Activated CD8-positive, alpha-beta T cell treated with anti-CD3 and anti-CD28 coated beads, Interleukin-2, amount 10 ng/mL, durations not matched to agents 7 days and 5 days (primary cell): ENCODE measurements at regions of chr5 and their contacts with region 1.

Region 1: GRCh38 chr5:40410231-40410861 is 269.4 kb upstream of the PTGER4 start:
- DNase-seq: peak; percentile 82
- ATAC-seq: peak; percentile 85
- H3K4me3 Mint-ChIP-seq: peak overlapping the region; percentile 60
- H3K27ac Mint-ChIP-seq: peak overlapping the region; percentile 91
- H3K4me1 Mint-ChIP-seq: peaks cover 62% of the 10 kb centered on the region
- H3K27me3 Mint-ChIP-seq: no peaks in the 10 kb centered on the region

Region 2: DNA sequence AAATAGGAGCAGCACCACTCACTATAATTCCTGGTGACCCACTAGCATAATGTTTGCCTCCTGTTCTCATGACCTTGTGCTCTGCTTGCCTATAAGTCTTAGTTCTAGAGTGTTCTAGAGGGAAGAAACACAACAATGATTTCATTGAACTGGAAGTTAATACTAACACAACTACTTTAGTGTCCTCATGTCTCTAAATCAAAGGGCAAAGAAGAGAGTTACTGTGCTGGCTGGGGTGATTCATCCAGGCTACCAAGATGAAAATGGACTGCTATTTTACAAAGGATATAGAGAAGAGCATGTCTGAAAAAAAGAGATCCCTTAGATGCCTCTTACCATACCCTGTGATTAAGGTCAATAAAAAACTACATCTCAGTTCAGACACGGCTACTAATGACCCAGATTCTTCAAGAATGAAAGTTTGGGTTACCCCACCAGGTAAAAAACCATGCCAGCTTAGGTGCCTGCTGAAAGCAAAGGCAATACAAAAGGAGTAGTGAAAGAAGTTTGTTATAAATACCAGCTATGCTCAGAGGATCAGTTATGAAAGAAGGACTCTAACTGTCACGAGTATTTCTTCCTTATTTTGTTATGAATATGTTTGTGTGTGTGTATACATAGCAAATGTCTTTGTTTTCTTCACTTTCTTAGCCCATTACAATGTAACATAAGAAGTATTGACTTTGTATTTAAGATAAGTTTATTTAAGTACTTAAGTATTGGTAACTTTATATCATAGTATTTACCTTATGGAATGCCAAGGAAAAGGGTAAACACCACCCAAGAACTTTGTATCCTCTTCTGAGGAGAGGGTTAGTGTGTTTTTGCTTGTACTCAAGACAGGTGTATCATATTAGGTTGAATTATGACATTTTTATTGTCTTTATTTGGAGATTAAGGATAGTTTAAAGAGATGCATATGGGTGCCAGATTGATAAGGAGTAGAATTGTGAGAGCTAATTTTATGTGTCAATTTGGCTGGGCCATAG is 44.7 kb before region 1 on chr5:
- CTCF ChIA-PET with region 1: no interaction called
- POLR2A ChIA-PET with region 1: no interaction called
- DNase-seq: no peak
- ATAC-seq: no peak
- H3K4me3 Mint-ChIP-seq: no peak overlapping the region
- H3K27ac Mint-ChIP-seq: no peak overlapping the region
- H3K4me1 Mint-ChIP-seq: peaks cover 4% of the 10 kb centered on the region
- H3K27me3 Mint-ChIP-seq: no peaks in the 10 kb centered on the region

Region 3: DNA sequence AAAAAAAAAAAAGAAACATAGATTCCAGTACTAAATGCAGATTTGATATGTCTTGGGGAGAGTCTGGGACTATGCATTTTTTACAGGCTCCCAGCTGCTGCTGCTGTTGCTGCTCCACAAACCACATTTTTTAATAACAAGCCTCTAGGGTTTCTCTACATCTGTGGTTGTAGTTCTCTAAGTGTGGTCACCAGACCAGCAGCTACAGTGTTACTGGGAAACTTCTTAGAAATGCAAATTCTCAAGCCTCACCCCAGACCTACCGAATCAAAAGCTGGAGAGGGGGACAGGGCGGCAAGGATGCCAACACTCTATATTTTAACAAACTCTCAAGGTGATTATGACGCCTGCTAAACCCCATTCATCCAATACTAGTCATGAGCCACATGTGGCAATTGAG is 24.1 kb before region 1 on chr5:
- CTCF ChIA-PET with region 1: interaction called, 29 read pairs
- POLR2A ChIA-PET with region 1: interaction called, 18 read pairs
- DNase-seq: peak; percentile 65
- ATAC-seq: peak; percentile 68
- H3K4me3 Mint-ChIP-seq: peak overlapping the region; percentile 15
- H3K27ac Mint-ChIP-seq: peak overlapping the region; percentile 60
- H3K4me1 Mint-ChIP-seq: peaks cover 90% of the 10 kb centered on the region
- H3K27me3 Mint-ChIP-seq: no peaks in the 10 kb centered on the region

Region 4: DNA sequence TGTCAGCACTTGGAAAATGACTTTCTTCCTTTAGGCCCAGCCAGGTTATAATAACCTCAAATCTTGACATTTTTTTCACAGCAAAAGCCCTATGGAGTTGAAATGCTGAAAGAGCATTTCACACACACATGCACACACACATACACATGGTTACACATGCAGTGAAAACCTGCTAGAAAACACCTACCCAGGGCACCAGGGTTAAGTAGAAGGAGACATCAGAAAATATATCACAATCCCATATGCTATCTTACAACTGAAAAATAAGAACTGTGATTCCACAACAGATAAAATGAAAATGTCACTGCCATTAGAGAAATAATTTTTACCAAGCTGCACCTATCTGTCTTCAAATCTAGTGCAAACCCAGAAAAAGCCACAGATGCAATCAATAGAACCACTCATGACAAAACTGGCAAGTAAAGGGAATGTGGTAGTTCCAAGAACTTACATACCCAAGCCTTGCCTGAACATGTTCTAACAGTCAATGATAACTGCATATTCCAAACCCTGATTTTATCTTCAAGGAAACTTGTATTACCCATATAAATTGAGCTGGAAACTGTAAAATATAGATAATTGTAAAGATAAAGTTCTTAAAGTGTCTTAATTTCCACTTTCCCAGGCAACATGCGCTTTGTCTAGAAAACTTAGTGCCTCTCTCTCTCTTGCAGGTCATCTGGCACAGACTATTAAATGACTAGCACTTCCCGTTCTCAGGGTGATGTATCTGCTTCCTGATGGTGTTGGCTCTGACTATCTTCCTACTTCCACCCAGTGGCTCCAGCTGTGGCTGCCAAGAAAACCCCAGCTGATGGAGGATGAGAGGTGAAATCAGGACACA is 19.1 kb after region 1 on chr5:
- CTCF ChIA-PET with region 1: interaction called, 27 read pairs
- POLR2A ChIA-PET with region 1: interaction called, 6 read pairs
- DNase-seq: no peak
- ATAC-seq: peak; percentile 78
- H3K4me3 Mint-ChIP-seq: peak overlapping the region; percentile 23
- H3K27ac Mint-ChIP-seq: peak overlapping the region; percentile 90
- H3K4me1 Mint-ChIP-seq: peaks cover 61% of the 10 kb centered on the region
- H3K27me3 Mint-ChIP-seq: no peaks in the 10 kb centered on the region

Region 5: DNA sequence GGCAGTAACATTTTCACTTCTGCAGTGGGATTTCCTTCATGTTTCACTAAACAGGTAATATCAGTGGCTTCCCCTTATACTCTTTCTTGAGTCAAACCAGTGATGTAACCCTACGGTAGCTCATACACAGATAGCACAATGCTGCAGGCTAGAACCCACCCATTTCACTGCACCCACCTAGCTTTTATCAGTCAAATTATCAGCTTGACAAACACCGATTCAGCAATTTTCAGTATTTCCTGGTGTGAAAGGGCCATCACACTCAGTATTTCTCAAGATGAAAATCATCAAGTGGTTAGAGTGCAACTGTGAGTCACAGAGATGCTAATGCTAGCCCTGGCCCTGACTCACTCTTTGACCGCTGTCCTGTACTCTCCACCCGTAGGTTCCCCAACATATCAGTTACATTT is 27.1 kb after region 1 on chr5:
- CTCF ChIA-PET with region 1: interaction called, 27 read pairs
- POLR2A ChIA-PET with region 1: interaction called, 12 read pairs
- DNase-seq: peak; percentile 37
- ATAC-seq: peak; percentile 41
- H3K4me3 Mint-ChIP-seq: no peak overlapping the region
- H3K27ac Mint-ChIP-seq: peak overlapping the region; percentile 83
- H3K4me1 Mint-ChIP-seq: peaks cover 79% of the 10 kb centered on the region
- H3K27me3 Mint-ChIP-seq: no peaks in the 10 kb centered on the region

Region 6: DNA sequence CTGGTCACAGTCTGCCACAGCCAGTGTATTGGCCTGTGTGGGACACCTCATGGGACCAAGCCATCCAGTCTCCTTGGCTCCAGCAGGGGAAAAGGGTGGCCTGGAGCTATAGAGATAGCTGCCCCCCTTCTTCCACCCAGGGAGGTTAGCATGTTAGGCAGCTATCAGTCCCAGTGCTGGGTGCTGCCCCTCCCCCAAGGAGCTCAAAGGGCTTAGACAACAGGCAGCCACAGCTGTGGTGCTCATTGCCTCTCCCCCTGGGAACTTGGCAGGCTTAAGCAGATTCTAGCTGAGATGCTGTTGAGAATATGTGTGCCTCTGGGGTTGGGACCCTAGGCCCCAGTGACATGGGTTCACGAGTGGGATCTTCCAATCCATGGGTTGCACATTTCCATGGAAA is 43.3 kb after region 1 on chr5:
- CTCF ChIA-PET with region 1: no interaction called
- POLR2A ChIA-PET with region 1: no interaction called
- DNase-seq: no peak
- ATAC-seq: no peak
- H3K4me3 Mint-ChIP-seq: no peak overlapping the region
- H3K27ac Mint-ChIP-seq: no peak overlapping the region
- H3K4me1 Mint-ChIP-seq: no peaks in the 10 kb centered on the region
- H3K27me3 Mint-ChIP-seq: no peaks in the 10 kb centered on the region

Region 7: GRCh38 chr5:40518511-40518967 is 108.2 kb after region 1 on chr5:
- CTCF ChIA-PET with region 1: no interaction called
- POLR2A ChIA-PET with region 1: no interaction called
- DNase-seq: no peak
- ATAC-seq: no peak
- H3K4me3 Mint-ChIP-seq: no peak overlapping the region
- H3K27ac Mint-ChIP-seq: no peak overlapping the region
- H3K4me1 Mint-ChIP-seq: peaks cover 27% of the 10 kb centered on the region
- H3K27me3 Mint-ChIP-seq: no peaks in the 10 kb centered on the region

Region 8: GRCh38 chr5:40652441-40653220 is 242.3 kb after region 1 on chr5:
- CTCF ChIA-PET with region 1: interaction called, 3 read pairs
- POLR2A ChIA-PET with region 1: interaction called, 11 read pairs
- DNase-seq: peak; percentile 58
- ATAC-seq: peak; percentile 53
- H3K4me3 Mint-ChIP-seq: peak overlapping the region; percentile 81
- H3K27ac Mint-ChIP-seq: peak overlapping the region; percentile 90
- H3K4me1 Mint-ChIP-seq: peaks cover 86% of the 10 kb centered on the region
- H3K27me3 Mint-ChIP-seq: no peaks in the 10 kb centered on the region